IMR-90 (cell line): ENCODE measurements at regions of chr2 and their contacts with region 1.

Region 1: DNA sequence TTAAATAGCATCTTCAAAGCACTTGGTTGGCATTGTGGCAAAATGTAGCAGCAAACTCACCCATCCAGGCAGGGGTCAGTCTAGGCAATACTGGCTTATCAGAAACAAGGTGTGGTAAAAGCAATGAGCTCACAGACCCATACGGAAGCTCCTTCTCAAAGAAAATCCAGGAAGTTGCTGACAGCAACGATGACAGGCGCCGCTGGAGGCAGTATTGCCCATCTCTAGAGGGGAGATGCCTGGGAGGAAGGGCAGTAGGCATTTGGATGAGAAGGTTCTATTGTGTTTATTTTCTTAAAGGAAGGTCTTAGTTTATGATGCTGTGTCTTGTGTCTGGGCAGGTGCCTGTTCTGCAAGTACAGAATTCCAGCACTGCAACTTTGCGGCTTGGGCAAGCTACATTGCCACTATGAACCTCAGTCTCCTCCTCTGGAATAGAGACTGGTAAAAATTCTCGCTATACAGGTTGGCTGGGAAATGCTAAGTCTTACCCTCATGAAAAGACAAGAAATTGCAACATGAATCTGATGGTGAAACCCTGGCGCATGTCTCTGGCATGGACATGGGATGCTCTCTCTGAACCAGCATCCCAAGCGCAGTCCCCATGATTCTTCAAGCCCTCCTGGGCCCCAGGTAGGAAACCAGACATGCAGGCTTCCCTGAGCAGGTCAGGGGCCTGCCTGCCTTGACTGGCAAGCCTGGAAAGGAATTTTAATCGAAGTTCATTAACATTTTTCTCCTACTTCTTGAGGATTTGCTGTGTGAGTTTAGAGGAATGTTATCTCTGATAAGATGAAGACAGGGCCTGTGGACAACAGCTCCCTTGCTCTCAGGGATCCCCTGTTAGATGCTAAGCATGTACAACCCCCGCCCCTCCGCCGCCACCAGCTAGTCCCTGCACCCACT is 156.0 kb downstream of the TFCP2L1 start:
- DNase-seq: no peak
- ATAC-seq: peak; percentile 46; the same call in 1 of the 2 replicates
- H3K4me3 ChIP-seq: no peak overlapping the region
- H3K27ac ChIP-seq: no peak overlapping the region
- H3K4me1 ChIP-seq: no peaks in the 10 kb centered on the region
- H3K27me3 ChIP-seq: peaks cover 45% of the 10 kb centered on the region
- CTCF ChIP-seq: peak; percentile 46
- POLR2A ChIP-seq: no peak
- RAD21 ChIP-seq: peak; percentile 53

Region 2: GRCh38 chr2:121140734-121141133 is 11.7 kb after region 1 on chr2:
- CTCF ChIA-PET with region 1: no interaction called
- POLR2A ChIA-PET with region 1: no interaction called
- dilution Hi-C with region 1: no loop called
- in situ Hi-C with region 1: no loop called
- intact Hi-C with region 1: no loop called
- DNase-seq: no peak
- ATAC-seq: no peak
- H3K4me3 ChIP-seq: no peak overlapping the region
- H3K27ac ChIP-seq: no peak overlapping the region
- H3K4me1 ChIP-seq: no peaks in the 10 kb centered on the region
- H3K27me3 ChIP-seq: peaks cover 30% of the 10 kb centered on the region
- CTCF ChIP-seq: no peak
- POLR2A ChIP-seq: no peak
- RAD21 ChIP-seq: no peak

Region 3: DNA sequence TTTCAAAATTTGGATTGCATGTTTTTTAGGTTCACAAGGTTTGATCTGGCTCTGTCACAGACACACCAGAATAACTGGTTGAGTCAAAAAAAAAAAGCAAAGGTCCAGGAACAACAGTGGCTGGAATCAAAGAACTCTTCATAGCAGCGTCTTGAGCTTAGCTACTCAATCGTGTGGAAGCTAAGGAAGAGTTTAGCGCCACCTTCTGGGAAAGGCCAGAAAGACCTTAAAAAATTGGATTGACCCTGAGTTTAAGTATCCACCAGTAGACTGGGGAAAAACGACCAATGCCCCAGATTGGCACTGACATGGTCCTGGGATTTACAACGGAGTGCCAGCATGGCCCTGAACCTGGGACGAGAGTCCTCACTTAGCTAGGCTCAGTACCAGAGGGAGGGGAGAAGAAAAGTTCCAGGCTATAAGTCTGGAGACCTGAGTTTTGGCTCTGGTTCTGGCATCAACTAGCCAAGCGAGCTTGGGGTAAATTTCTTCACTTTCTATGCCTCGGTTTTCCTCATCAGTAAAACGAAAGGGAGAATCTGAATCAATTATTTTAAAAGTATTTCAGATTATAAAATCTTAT is 227.1 kb after region 1 on chr2:
- CTCF ChIA-PET with region 1: interaction called, 10 read pairs
- POLR2A ChIA-PET with region 1: no interaction called
- dilution Hi-C with region 1: no loop called
- in situ Hi-C with region 1: no loop called
- intact Hi-C with region 1: no loop called
- DNase-seq: peak; percentile 69
- ATAC-seq: peak; percentile 85
- H3K4me3 ChIP-seq: no peak overlapping the region
- H3K27ac ChIP-seq: no peak overlapping the region
- H3K4me1 ChIP-seq: peaks cover 8% of the 10 kb centered on the region
- H3K27me3 ChIP-seq: no peaks in the 10 kb centered on the region
- CTCF ChIP-seq: peak; percentile 70
- POLR2A ChIP-seq: no peak
- RAD21 ChIP-seq: peak; percentile 55

Region 4: GRCh38 chr2:121400201-121400600 is 271.2 kb after region 1 on chr2:
- CTCF ChIA-PET with region 1: no interaction called
- POLR2A ChIA-PET with region 1: no interaction called
- dilution Hi-C with region 1: no loop called
- in situ Hi-C with region 1: no loop called
- intact Hi-C with region 1: no loop called
- DNase-seq: peak; percentile 85
- ATAC-seq: peak; percentile 82
- H3K4me3 ChIP-seq: no peak overlapping the region
- H3K27ac ChIP-seq: peak overlapping the region; percentile 43; the same call in 1 of the 2 replicates
- H3K4me1 ChIP-seq: peaks cover 4% of the 10 kb centered on the region
- H3K27me3 ChIP-seq: no peaks in the 10 kb centered on the region
- CTCF ChIP-seq: no peak
- POLR2A ChIP-seq: no peak
- RAD21 ChIP-seq: no peak; the same call in 1 of the 2 replicates